ENCODE measurements at regions of chr11 and their contacts with region 1.

Region 1: GRCh38 chr11:79493555-79494171 is 52.8 kb upstream of the TENM4 start:
- DNase-seq: peak; percentile 63 to 81
- H3K4me3 ChIP-seq: no peak overlapping the region
- H3K27ac ChIP-seq: no peak overlapping the region
- H3K4me1 ChIP-seq: no peaks in the 10 kb centered on the region
- H3K27me3 ChIP-seq: peaks cover 0 to 7% of the 10 kb centered on the region in 2 donors
- CTCF ChIP-seq: peak; percentile 80 to 88

Region 2: GRCh38 chr11:79400717-79401686 is 92.7 kb before region 1 on chr11:
- intact Hi-C with region 1: loop called (anchors 2 kb)
- DNase-seq: no peak
- H3K4me3 ChIP-seq: no peak overlapping the region
- H3K27ac ChIP-seq: no peak overlapping the region
- H3K4me1 ChIP-seq: no peaks in the 10 kb centered on the region
- H3K27me3 ChIP-seq: no peaks in the 10 kb centered on the region
- CTCF ChIP-seq: peak; percentile 54 to 72